RWPE1 (cell line): ENCODE measurements at regions of chr10 and their contacts with region 1.

Region 1: DNA sequence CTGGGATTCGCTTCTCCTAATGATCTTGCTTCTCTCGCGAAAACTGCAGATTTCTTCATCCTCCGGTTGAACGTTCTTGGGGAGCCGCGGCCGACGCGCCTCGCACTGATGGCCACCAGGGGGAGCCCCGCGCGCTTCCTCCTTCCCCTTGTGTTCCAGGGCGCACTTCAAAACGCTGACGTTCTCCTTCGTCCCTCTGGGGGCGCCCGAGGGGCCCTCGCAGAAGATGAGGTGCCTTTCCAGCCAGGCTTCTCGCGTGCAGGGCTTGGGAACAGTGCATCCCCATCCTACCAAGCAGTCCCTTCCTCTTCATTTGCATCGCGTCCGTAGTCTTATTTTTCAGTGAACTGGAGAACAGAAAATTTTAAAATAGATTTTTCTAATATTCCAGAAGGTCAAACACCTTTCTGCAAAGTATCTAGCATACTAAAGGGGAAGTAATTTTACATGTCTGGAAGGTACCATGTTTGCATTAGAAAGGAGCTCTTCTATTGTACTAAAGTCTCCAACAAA is 22.5 kb downstream of the GSTO2 start:
- DNase-seq: peak; percentile 93
- H3K27ac ChIP-seq: peak overlapping the region; percentile 31; the same call in 1 of the 2 replicates
- CTCF ChIP-seq: peak; percentile 99

Region 2: GRCh38 chr10:104274762-104275721 is 16.5 kb before region 1 on chr10:
- CTCF ChIA-PET with region 1: interaction called, 13 read pairs
- POLR2A ChIA-PET with region 1: interaction called, 3 read pairs
- DNase-seq: peak; percentile 88
- H3K27ac ChIP-seq: peak overlapping the region; percentile 73
- CTCF ChIP-seq: peak; percentile 96

Region 3: DNA sequence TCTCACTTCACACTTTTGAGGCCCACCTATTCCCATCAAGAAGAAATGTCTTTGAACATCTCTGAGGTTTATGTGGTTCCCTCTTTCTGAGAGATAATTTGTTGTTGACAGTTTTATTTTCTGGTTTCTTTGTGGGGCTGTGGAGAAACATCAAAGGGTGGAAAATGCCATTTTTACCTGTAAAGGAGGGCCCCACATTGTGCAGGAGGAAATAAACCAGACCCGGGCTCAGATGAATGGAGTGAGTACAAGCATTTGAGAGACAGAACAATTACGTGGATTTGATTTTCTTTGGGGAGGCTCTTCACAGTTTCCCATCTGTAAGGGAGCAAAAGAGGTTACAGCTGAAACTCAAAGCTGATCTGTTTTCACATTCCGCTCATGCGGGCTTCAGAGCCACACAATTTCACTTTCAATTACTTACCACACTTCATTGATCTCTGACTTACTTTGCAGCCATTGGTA is 17.0 kb after region 1 on chr10:
- CTCF ChIA-PET with region 1: interaction called, 42 read pairs
- POLR2A ChIA-PET with region 1: no interaction called
- DNase-seq: no peak
- H3K27ac ChIP-seq: no peak overlapping the region
- CTCF ChIP-seq: no peak

Region 4: GRCh38 chr10:104322416-104322782 is 30.9 kb after region 1 on chr10:
- CTCF ChIA-PET with region 1: interaction called, 10 read pairs
- POLR2A ChIA-PET with region 1: no interaction called
- DNase-seq: peak; percentile 83
- H3K27ac ChIP-seq: peak overlapping the region; percentile 99
- CTCF ChIP-seq: no peak

Region 5: GRCh38 chr10:104345941-104346340 is 54.4 kb after region 1 on chr10:
- CTCF ChIA-PET with region 1: interaction called, 39 read pairs
- POLR2A ChIA-PET with region 1: no interaction called
- DNase-seq: no peak
- H3K27ac ChIP-seq: no peak overlapping the region
- CTCF ChIP-seq: no peak

Region 6: GRCh38 chr10:104353325-104354048 is 62.0 kb after region 1 on chr10 and contains the start of gene CFAP58:
- CTCF ChIA-PET with region 1: interaction called, 39 read pairs
- POLR2A ChIA-PET with region 1: no interaction called
- DNase-seq: peak; percentile 98
- H3K27ac ChIP-seq: peak within 1 kb of the TSS; percentile 47
- CTCF ChIP-seq: peak; percentile 71

Region 7: DNA sequence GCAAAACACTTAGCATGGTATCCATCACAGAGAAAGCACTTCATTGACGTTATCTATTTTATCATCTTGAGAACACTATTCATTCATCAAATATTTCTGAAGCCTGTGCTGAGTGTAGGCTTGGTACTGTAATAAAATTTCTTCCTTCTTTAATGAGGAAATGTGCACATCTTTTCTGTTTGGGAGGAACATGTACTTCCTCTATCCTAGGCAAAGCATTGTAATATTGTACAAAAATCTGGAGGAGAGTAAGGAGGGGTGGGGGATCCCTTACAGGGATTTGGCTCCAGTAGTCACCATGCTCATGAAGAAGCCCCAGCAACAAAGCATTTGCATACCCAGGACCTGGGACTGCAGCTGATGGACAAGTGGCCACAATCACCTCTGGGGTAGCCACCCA is 309.7 kb after region 1 on chr10:
- CTCF ChIA-PET with region 1: no interaction called
- POLR2A ChIA-PET with region 1: no interaction called
- DNase-seq: no peak
- H3K27ac ChIP-seq: no peak overlapping the region
- CTCF ChIP-seq: no peak